Dorsolateral prefrontal cortex (tissue), 120 donors: ENCODE measurements at regions of chr22 and their contacts with region 1.

Region 1: GRCh38 chr22:49936018-49936952 is 17.9 kb downstream of the CRELD2 start:
- DNase-seq: peak in 8 of 10 donors; percentile 35 to 87 (median 62)
- H3K4me3 ChIP-seq: peak overlapping the region; percentile 39 to 73 (median 59)
- H3K27ac ChIP-seq: peak overlapping the region; percentile 74 to 98 (median 93)
- H3K27me3 ChIP-seq: no peaks in the 10 kb centered on the region
- CTCF ChIP-seq: peak in 6 of 56 donors; percentile 7 to 23 (median 19)

Region 2: DNA sequence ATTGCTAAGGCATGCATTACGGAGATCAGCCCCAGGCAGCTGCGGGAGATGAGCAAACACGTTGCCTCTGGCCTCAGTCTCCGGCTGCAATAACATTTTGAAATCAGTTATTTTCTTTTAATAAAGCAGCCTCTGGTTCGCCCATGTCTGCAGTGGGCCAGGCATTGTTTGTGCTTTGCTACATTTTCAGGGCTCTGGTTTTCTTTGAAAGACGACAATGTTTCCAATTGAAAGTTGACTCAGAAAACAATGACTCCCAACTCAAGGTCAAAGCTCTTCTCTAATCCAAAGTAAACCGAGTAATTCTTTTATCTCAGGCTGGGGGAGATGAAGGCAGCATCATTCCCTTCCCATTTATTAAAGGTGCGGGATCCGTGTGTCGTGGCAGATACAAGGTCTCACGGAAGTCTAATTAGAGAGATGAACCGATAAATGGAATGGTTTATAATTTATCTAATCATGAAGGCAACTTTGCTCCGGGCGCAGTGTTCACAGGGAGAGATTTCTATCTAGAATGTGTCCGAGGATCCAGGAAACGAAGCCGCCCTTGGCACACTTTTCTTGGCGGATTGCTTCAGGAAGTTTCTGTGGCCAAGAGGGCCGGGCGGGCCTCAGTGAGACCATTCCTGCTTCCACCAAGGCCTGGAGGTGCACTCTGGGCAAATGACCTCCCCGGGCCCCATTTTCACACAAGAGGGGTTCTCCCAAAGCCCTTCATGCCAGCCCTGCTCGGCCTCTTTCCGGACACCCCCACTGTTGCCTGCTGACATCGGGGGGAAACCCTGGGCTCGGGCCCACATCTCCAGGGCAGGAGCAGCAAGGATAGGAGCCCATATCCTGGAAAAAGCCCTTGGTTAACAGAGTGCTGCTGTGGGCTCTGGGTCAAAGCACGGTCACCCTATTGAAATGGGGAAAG is 920.0 kb before region 1 on chr22:
- intact Hi-C with region 1: no loop called
- DNase-seq: peak in 4 of 10 donors; percentile 13 to 34 (median 26)
- H3K4me3 ChIP-seq: no peak overlapping the region
- H3K27ac ChIP-seq: peak overlapping the region in 13 of 59 donors; percentile 9 to 61 (median 46)
- H3K27me3 ChIP-seq: peaks cover 0 to 5% (median 0%) of the 10 kb centered on the region in 45 donors
- CTCF ChIP-seq: no peak

Region 3: DNA sequence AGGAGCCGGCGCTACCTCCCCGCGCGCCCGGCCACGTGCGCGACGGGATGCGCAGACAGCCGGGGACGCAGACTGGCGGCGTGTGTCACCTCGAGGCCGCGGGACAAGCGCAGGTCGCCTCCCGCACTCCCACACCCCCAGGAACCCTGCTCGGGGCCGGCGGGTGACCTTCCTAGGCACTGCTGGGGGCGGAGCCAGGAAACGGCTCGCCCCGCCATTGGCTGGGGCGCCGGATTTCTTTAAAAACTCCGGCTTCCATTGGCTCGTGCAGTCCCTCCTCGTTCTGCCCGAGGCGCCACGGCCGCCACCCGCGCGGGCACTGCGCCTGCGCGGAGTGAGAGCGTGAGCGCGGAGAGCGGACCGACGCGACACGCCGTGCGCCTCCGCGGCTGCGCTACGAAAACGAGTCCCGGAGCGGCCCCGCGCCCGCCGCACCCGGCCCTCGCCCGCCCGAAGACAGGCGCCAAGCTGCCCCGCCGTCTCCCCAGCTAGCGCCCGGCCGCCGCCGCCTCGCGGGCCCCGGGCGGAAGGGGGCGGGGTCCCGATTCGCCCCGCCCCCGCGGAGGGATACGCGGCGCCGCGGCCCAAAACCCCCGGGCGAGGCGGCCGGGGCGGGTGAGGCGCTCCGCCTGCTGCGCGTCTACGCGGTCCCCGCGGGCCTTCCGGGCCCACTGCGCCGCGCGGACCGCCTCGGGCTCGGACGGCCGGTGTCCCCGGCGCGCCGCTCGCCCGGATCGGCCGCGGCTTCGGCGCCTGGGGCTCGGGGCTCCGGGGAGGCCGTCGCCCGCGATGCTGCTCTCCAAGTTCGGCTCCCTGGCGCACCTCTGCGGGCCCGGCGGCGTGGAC is 24.1 kb after region 1 on chr22 and contains the start of gene PIM3:
- intact Hi-C with region 1: loop called in 1 of 2 experiments (anchors 1 kb)
- DNase-seq: peak; percentile 91 to 96 (median 93)
- H3K4me3 ChIP-seq: peak within 1 kb of the TSS; percentile 58 to 95 (median 86)
- H3K27ac ChIP-seq: peak within 1 kb of the TSS; percentile 78 to 99 (median 95)
- H3K27me3 ChIP-seq: no peaks in the 10 kb centered on the region
- CTCF ChIP-seq: peak in 25 of 56 donors; percentile 2 to 52 (median 19)
- total RNA-seq, gene PIM3: 18.9 to 92.4 (median 32.9) TPM

Region 4: GRCh38 chr22:49970528-49971231 is 34.4 kb after region 1 on chr22:
- intact Hi-C with region 1: loop called in 1 of 2 experiments (anchors 5 kb)
- DNase-seq: peak; percentile 63 to 98 (median 90)
- H3K4me3 ChIP-seq: peak overlapping the region; percentile 39 to 76 (median 67)
- H3K27ac ChIP-seq: peak overlapping the region; percentile 45 to 98 (median 92)
- H3K27me3 ChIP-seq: no peaks in the 10 kb centered on the region
- CTCF ChIP-seq: peak in 5 of 56 donors; percentile 12 to 29 (median 15)

Region 5: GRCh38 chr22:50200461-50201190 is 264.3 kb after region 1 on chr22 and contains the start of gene SELENOO:
- intact Hi-C with region 1: loop called in 1 of 2 experiments (anchors 10 kb)
- DNase-seq: peak; percentile 84 to 95 (median 92)
- H3K4me3 ChIP-seq: peak within 1 kb of the TSS; percentile 57 to 98 (median 81)
- H3K27ac ChIP-seq: peak within 1 kb of the TSS in 54 of 59 donors; percentile 7 to 93 (median 78)
- H3K27me3 ChIP-seq: no peaks in the 10 kb centered on the region
- CTCF ChIP-seq: peak in 12 of 56 donors; percentile 8 to 20 (median 14)
- total RNA-seq, gene SELENOO: 21.8 to 41.6 (median 30.1) TPM